Cardiac septum (tissue), 1 donor: ENCODE measurements at regions of chrX and their contacts with region 1.

Region 1: DNA sequence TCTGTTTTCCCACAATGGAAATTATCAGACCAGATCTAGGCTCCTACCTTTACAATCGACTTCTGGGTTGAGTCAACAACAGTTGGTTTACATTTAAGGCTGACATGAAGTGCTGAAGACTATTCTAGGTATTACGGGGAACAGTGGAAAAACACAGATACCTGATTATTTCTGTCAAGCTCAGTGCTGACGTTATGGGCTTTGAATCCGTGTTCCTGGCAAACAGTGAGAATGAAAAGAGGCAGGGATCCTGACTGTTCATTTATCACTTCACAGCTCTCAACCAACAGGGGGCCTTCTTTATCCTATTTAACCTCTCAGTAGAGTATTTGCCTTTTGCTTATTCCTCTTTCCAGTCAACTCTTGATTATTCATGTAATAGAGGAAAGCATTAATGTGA is 43.1 kb downstream of the TMEM164 start:
- DNase-seq: no peak

Region 2: DNA sequence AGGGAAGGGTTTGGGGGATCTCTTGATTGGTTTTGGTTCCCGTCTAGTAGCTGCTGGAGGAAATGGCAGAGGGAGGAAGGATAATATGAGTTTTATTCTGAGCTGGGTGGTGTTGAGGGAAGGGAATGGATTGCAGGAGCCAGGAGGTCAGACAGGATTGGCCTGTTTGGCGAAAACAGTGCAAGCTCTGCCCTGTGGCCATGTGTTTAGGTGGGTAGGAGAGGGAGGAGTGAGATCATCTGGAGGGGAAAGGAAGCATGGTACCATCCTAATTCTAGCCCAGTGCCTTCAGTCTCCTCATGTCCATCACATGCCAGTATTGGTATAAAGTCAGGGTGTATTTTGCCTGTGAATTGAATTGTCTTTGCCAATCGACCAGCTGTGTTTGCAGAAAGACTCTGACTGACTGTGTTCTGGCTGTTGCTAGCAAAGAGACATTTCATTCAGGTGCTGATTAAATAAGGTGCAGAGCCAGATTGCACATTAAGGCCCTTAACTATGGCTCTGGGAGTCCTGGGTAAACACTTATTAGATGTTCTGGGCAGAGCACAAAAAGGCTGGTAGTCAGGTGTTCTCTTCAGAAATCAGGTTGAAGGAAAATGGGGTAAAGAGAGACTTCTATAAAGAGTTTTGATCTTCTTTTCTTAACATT is 33.0 kb before region 1 on chrX:
- intact Hi-C with region 1: no loop called
- DNase-seq: no peak

Region 3: GRCh38 chrX:110060846-110061537 is 15.0 kb after region 1 on chrX:
- intact Hi-C with region 1: loop called (anchors 2 kb)
- DNase-seq: no peak